ENCODE measurements at regions of chr17 and their contacts with region 1.

Region 1: GRCh38 chr17:78289802-78290363 is 58.5 kb downstream of the TMEM235 start:
- DNase-seq: peak; percentile 77
- H3K4me3 ChIP-seq: no peak overlapping the region
- H3K27ac ChIP-seq: no peak overlapping the region
- H3K4me1 ChIP-seq: no peaks in the 10 kb centered on the region
- H3K27me3 ChIP-seq: no peaks in the 10 kb centered on the region
- CTCF ChIP-seq: peak; percentile 28 to 88 (median 66)
- POLR2A ChIP-seq: no peak

Region 2: DNA sequence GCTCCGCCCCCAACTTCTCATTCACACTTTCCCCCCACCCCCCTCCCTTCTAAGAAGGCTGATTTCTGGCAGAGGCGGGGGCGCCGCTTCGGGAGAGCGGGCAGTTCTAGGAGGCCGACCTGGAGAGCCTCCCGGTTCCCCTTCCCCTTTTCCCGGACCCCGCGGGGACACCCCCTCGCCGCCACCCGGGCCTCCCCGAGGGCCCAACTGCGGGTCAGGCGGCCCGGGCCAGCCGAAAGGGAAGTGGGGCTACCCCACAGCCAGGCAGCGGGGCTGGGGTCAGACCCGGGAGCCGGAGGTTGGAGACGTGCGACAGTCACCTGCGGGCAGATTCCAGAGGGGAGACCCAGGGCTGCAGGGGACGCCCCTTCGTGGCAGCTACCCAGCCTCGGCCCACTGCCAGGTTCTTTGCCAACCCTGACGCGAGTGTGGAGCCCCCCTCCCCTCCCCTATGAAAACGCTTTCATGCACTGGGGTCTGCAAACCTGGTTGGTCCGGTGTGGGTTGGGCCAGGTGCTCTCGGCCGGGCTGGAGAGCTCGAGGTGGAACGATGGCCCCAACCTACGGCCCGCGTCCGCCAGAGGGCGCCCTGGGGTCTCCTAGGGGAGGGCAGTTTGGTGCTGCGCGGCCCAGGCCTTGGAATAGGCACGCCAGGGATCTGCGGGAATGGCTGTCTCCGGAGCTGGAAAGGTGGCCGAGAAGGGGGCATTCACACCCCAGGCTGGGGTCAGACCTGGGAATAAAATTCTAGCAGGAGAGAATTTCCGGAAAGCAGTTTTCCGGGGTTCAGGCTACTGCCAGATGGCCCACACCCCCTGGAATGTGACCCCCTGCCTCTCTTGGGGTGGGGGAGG is 70.7 kb after region 1 on chr17:
- intact Hi-C with region 1: loop called (anchors 5 kb)
- DNase-seq: peak; percentile 89
- H3K4me3 ChIP-seq: peak overlapping the region; percentile 43 to 59
- H3K27ac ChIP-seq: peak overlapping the region; percentile 69 to 82
- H3K4me1 ChIP-seq: peaks cover 7% of the 10 kb centered on the region
- H3K27me3 ChIP-seq: no peaks in the 10 kb centered on the region
- CTCF ChIP-seq: peak; percentile 77 to 98 (median 88)
- POLR2A ChIP-seq: peak; percentile 5

Region 3: GRCh38 chr17:78421484-78422266 is 131.8 kb after region 1 on chr17:
- intact Hi-C with region 1: loop called (anchors 2 kb)
- DNase-seq: peak; percentile 69
- H3K4me3 ChIP-seq: no peak overlapping the region
- H3K27ac ChIP-seq: no peak overlapping the region
- H3K4me1 ChIP-seq: no peaks in the 10 kb centered on the region
- H3K27me3 ChIP-seq: no peaks in the 10 kb centered on the region
- CTCF ChIP-seq: peak; percentile 88 to 98 (median 98)
- POLR2A ChIP-seq: no peak